Activated CD4-positive, alpha-beta T cell treated with anti-CD3 and anti-CD28 coated beads for 36 hours (primary cell): ENCODE measurements at regions of chr1 and their contacts with region 1.

Region 1: GRCh38 chr1:174174461-174175329 is 15.4 kb downstream of the RABGAP1L start:
- DNase-seq: peak; percentile 61
- ATAC-seq: peak; percentile 95
- H3K4me3 Mint-ChIP-seq: no peak overlapping the region
- H3K27ac Mint-ChIP-seq: no peak overlapping the region
- H3K4me1 Mint-ChIP-seq: peaks cover 26% of the 10 kb centered on the region
- H3K27me3 Mint-ChIP-seq: no peaks in the 10 kb centered on the region

Region 2: GRCh38 chr1:174080819-174081218 is 93.9 kb before region 1 on chr1:
- CTCF ChIA-PET with region 1: no interaction called
- POLR2A ChIA-PET with region 1: no interaction called
- intact Hi-C with region 1: no loop called
- DNase-seq: no peak
- ATAC-seq: no peak
- H3K4me3 Mint-ChIP-seq: no peak overlapping the region
- H3K27ac Mint-ChIP-seq: no peak overlapping the region
- H3K4me1 Mint-ChIP-seq: no peaks in the 10 kb centered on the region
- H3K27me3 Mint-ChIP-seq: peaks cover 1% of the 10 kb centered on the region

Region 3: GRCh38 chr1:174204697-174205308 is 30.1 kb after region 1 on chr1:
- CTCF ChIA-PET with region 1: interaction called, 5 read pairs
- POLR2A ChIA-PET with region 1: interaction called, 4 read pairs
- intact Hi-C with region 1: loop called (anchors 2 kb)
- DNase-seq: peak; percentile 24
- ATAC-seq: peak; percentile 76
- H3K4me3 Mint-ChIP-seq: peak overlapping the region; percentile 7
- H3K27ac Mint-ChIP-seq: peak overlapping the region; percentile 87
- H3K4me1 Mint-ChIP-seq: peaks cover 71% of the 10 kb centered on the region
- H3K27me3 Mint-ChIP-seq: no peaks in the 10 kb centered on the region